ENCODE measurements at regions of chr17 and their contacts with region 1.

Region 1: GRCh38 chr17:4733073-4733531 is 1.9 kb downstream of the MED11 start:
- DNase-seq: no peak
- H3K4me3 ChIP-seq: no peak overlapping the region
- H3K27ac ChIP-seq: peak overlapping the region in 1 of 4 donors; percentile 30
- H3K4me1 ChIP-seq: peaks cover 9 to 24% (median 19%) of the 10 kb centered on the region in 4 donors
- H3K27me3 ChIP-seq: no peaks in the 10 kb centered on the region
- CTCF ChIP-seq: peak in 1 of 3 experiments; percentile 8
- EP300 ChIP-seq: no peak
- POLR2A ChIP-seq: no peak

Region 2: DNA sequence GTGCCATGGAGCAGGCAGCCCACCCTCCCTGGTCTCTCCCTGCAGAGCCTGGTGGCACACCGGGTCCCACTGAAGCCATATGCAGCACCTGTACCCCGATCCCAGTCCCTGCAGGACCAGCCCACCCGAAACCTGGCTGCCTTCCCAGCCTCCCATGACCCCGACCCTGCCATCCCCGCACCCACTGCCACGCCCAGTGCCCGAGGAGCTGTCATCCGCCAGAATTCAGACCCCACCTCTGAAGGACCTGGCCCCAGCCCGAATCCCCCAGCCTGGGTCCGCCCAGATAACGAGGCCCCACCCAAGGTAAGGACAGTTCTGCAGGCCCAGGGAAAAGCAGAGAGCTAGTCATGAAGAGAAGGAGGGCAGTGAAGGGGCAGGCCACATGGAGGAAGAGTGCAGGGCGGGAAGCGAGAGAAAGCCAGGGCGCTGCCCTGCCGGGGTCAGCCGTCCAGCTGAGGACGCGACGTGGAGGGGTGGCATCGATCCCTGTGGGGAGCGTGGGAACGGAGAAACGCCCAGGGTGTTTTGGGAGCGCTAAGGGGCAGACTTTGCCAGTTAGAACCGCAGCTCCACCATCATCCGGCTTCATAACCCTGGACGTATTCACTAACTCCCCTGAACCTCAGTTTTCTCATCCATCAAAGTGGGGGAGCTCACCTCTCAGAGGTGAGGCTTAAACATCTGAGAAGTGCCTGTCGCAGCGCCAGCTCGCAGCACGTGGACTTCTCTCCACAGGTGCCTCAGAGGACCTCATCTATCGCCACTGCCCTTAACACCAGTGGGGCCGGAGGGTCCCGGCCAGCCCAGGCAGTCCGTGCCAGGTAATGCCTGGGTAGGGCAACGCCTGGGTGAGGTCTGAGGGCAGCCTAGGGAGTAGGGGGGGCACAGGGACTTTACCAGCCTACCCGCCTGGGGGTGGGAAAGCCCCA is 158.6 kb after region 1 on chr17:
- intact Hi-C with region 1: loop called (anchors 2 kb)
- DNase-seq: no peak
- H3K4me3 ChIP-seq: no peak overlapping the region
- H3K27ac ChIP-seq: no peak overlapping the region
- H3K4me1 ChIP-seq: peaks cover 0 to 5% (median 0%) of the 10 kb centered on the region in 4 donors
- H3K27me3 ChIP-seq: no peaks in the 10 kb centered on the region
- CTCF ChIP-seq: no peak
- EP300 ChIP-seq: no peak
- POLR2A ChIP-seq: no peak

Measured in esophagus muscularis mucosa (tissue), 4 donors.